AG04449 (cell line): ENCODE measurements at regions of chr2 and their contacts with region 1.

Region 1: GRCh38 chr2:207473049-207473930 is 56.5 kb upstream of the CREB1 start:
- DNase-seq: peak; percentile 45
- H3K4me3 ChIP-seq: no peak overlapping the region
- CTCF ChIP-seq: peak; percentile 84

Region 2: DNA sequence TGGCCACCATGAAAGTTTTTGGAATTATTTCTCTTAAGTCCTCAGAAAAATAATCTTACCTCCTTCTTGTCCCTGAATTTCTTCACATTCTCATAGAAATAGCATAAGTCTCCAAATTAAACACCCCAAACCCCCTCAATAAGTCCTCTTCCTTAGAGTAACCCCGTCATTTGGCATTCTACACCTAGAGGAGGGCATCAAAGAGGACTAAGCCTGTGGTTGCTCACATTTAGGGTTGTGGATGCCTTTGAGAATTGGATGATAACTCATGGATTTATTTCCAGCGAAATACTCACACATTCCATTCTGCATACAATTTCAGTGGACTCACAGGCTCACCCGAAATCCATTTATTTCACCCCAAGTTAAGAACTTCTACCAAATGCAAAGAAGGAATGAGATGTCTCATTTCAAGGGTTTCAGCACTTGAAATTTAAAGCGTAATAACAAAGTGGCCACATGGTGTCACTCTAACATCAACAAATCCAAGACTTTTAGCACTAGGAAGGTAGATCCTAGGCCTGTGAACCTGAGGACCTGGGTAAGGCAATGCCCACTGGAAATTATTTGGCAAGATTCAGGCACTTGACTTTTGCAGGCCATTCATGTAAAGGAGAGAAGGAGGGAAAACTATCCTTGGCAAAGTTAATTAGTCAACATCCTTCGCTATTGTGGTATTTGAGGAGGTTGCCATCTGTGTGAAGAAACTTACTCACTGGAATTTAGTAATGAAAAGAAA is 779.7 kb before region 1 on chr2:
- CTCF ChIA-PET with region 1: interaction called, 11 read pairs
- POLR2A ChIA-PET with region 1: no interaction called
- DNase-seq: peak; percentile 9
- H3K4me3 ChIP-seq: no peak overlapping the region
- CTCF ChIP-seq: peak; percentile 39

Region 3: DNA sequence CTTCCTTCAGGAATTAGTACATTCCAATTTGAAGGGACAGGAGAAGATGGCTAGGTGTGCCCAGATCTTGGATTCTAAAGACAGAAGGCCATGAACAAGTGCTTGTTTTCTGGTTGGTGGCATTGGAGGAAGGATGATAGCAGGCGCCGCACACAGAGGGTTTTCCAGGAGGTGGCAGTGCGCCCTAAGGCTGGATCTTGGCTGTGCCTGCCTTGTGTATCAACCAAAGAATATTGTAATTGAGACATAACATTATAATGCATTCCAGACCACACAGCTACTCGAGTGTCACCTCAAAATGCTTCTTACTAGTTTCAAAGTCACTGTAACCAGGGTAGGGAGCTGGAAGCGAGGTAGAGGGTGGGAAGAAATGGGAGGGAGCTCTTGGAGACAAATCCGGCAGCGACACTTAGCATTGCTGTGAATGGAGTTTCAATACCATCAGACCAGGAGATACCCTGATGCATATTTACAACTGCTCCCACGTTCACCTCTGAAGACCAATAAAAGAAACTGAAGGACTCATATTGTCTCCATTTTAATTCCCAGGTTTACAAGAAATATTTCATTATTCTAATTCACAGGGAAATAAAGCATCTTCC is 491.4 kb before region 1 on chr2:
- CTCF ChIA-PET with region 1: interaction called, 163 read pairs
- POLR2A ChIA-PET with region 1: interaction called, 3 read pairs
- DNase-seq: no peak
- H3K4me3 ChIP-seq: no peak overlapping the region
- CTCF ChIP-seq: peak; percentile 89

Region 4: GRCh38 chr2:207115715-207116364 is 357.4 kb before region 1 on chr2:
- CTCF ChIA-PET with region 1: interaction called, 12 read pairs
- POLR2A ChIA-PET with region 1: no interaction called
- DNase-seq: no peak
- H3K4me3 ChIP-seq: no peak overlapping the region
- CTCF ChIP-seq: no peak

Region 5: DNA sequence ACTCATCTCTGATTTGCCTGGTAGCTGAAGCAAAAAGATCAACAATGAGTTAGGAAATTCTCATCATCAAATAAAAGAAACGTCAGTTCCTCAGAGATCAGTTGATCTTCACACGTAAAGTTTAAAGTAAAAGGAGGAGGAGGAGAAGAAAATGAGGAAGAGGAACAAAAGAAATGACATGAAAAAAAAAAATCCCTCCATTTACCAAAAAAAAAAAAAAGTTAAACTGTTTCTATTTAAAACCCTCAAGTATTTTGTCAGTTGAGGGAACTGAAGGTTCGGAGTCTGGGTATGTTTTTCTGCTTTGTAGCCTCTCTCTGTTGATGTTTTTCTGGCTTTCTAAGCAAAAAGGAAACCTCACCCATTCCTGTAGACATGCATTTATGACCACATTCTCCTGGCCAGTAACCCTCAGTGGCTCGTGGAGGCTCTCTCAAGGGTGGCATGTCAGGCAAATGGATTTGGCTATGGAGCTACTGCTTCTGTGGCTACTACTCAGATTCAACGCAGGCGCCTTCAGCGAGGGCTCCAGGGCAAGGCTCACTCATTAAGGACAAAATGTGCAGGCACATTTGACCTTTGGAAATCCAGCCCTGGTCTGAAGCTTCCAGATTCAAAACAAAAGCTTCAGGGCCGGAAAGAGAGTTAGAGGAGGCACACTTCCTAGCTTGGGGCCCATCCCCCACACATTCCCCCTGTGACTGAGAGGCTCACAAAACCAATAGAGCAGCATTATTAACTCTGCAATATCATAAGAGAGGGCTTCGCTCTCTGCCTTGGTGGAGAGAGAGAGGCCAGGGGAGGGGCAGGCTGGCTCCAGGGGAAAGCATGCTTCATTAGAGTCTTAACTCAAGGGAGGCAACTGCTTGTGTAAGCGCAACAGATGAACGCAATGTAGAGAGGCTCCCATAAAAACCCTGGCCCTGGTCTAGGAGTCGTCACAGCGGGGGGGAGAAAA is 329.8 kb before region 1 on chr2:
- CTCF ChIA-PET with region 1: interaction called, 22 read pairs
- POLR2A ChIA-PET with region 1: no interaction called
- DNase-seq: no peak
- H3K4me3 ChIP-seq: no peak overlapping the region
- CTCF ChIP-seq: no peak

Region 6: GRCh38 chr2:207166039-207166348 is 307.3 kb before region 1 on chr2:
- CTCF ChIA-PET with region 1: interaction called, 56 read pairs
- POLR2A ChIA-PET with region 1: interaction called, 15 read pairs
- DNase-seq: peak; percentile 99
- H3K4me3 ChIP-seq: peak overlapping the region; percentile 68; the same call in 1 of the 2 replicates
- CTCF ChIP-seq: no peak

Region 7: DNA sequence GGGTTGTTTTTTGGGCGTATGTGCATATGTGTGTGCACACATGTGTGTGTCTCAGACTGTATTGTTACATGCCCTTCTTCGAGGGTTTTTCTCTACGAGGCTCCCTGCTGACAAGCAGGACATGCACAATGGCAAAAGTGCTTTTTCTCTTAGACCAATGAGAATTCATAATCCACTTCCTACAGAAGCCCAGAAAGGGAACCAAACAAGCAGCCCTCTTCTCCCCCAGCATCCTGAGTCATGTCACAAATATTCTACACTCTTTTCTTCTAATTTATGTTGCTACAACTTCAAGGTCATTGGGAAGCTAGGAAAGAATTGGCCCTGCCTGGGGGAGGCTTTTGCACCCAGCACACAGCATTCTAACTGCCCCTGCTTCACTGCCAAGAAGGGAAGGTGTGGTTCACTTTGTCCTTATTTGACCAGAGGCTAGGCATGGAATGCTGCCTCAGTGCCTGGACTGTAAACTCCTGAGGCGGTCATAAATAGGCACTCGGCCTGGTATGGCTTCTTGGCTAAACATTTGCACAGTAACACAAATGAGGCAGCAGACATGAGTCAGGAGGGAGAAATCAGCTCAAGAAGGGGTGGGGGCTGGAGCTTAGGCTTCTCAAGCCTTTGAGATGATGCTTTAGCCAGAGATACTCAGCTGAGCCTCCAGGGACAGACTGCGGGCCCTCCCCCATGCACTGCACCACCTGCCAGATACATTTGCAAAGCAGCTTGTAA is 214.9 kb before region 1 on chr2:
- CTCF ChIA-PET with region 1: interaction called, 39 read pairs
- POLR2A ChIA-PET with region 1: interaction called, 7 read pairs
- DNase-seq: peak; percentile 100
- H3K4me3 ChIP-seq: no peak overlapping the region
- CTCF ChIP-seq: peak; percentile 29

Region 8: DNA sequence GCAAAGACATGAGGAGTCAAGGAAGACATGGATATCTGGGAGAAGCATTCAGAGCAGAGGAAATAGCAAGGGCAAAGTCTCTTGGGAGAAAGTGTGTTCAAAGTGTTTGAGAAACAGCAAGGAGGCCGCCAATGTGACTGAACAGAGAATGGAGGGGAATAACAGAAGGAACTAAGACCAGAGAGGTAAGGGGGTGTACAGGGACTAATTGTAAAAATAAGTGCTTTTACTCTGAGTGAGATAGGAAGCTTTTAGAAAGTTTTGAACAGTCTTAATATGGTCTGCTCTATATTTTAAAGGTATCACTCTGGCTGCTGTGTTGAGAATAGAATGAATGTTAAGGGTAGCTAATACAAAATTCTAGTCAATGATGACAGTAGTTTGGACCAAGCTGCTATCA is 49.7 kb after region 1 on chr2:
- CTCF ChIA-PET with region 1: no interaction called
- POLR2A ChIA-PET with region 1: no interaction called
- DNase-seq: no peak
- H3K4me3 ChIP-seq: no peak overlapping the region
- CTCF ChIP-seq: no peak